ENCODE measurements at regions of chr3 and their contacts with region 1.

Region 1: DNA sequence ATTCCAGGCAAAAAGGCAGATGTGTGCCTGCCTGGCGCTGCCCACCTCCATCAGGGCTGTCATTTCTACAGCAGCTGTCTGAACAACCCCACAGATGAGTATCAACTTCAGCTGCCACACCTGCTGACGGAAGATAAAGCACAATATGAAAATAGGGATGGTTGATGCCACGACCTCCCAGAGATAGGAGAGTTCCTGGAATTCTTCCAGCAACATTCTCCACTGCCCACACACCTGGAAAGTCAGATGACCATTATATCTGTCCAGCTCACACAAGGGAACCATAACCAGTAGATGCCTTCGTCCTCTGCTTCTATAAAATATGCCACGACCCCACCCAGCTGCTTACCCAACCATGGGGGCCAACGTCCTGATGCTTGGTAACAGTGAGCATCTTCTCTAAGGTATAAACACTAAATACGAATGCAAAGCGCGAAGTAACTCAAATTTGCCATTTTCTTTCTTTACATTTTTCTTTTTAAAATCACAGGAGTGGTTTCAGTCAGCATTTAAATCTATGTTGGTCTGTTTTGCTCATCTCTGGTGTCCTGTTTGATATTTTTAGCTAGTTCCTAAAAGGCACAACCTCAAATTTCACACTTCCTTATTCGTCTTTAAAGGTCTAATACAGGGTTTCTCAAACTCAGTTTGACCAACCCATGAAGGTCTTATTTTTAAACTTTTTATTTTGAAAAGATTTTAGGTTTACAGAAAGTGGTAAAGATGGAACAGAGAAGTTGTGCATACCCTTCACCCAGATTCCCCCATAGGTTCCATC is 201.3 kb downstream of the MAGI1 start:
- DNase-seq: no peak
- ATAC-seq: no peak
- H3K4me3 ChIP-seq: no peak overlapping the region
- H3K27ac ChIP-seq: no peak overlapping the region
- H3K4me1 ChIP-seq: peaks cover 0 to 20% (median 14%) of the 10 kb centered on the region in 12 donors
- H3K27me3 ChIP-seq: no peaks in the 10 kb centered on the region
- CTCF ChIP-seq: no peak
- POLR2A ChIP-seq: no peak

Region 2: GRCh38 chr3:65867463-65868210 is 30.2 kb after region 1 on chr3:
- intact Hi-C with region 1: loop called in 1 of 10 experiments (anchors 2 kb)
- DNase-seq: no peak
- ATAC-seq: no peak
- H3K4me3 ChIP-seq: no peak overlapping the region
- H3K27ac ChIP-seq: no peak overlapping the region
- H3K4me1 ChIP-seq: peaks cover 0 to 24% (median 8%) of the 10 kb centered on the region in 12 donors
- H3K27me3 ChIP-seq: no peaks in the 10 kb centered on the region
- CTCF ChIP-seq: no peak
- POLR2A ChIP-seq: no peak